Posterior vena cava (tissue), 2 donors: ENCODE measurements at regions of chr5 and their contacts with region 1.

Region 1: GRCh38 chr5:146380714-146381113 is 42.1 kb downstream of the POU4F3 start:
- DNase-seq: no peak

Region 2: DNA sequence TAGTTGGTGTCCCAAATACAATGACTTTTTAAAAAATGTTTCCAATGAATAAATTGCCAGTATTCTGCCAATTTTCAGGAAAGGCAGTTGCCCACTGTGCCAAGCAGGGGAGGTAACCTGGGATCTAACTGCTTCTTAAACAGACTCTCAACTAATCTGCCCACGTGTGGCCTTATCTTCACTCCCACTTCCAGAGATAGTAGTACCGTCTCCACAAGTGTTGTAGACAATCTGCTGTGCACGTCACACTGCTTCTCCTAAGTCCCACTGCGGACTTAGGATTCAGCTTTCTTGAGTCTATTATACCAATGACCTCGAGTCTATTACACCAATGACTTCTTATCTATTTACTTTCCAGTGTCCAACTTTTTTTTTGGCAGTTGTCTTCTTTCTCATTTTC is 20.9 kb before region 1 on chr5:
- intact Hi-C with region 1: loop called in 1 of 2 experiments (anchors 1 kb)
- DNase-seq: no peak

Region 3: DNA sequence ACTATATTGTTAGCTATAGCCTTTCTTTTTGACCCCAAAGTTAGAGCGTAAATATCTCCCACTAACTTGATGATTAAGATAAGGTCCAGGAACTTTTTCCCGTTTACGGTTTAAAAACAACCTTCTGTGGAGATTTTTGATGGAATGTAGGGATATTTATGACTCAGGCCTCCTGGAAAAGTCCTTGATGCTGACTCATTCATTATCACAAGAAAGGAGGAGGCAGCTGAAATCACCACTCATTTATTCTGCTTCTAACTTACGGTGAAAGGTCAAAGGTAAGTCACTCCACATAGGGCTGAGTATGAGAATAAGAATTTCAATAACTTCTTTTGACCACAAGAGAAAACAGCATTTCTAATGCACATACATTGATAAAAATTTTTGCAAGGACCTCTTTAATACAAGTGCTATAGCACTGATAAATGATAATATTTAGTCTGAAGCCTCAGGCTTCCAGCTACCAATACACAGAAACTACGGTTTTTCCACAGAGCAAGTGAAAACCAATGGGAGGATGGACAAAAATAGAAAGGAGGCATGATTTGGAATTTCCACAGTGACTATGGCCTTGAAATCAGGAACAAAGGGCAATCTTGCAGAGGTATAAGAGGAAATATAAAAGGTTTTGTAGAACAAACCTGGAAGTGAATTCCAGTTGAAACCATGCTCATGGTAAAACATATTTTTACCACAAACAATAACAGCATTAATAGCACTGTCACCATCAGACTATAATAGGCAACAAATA is 351.4 kb after region 1 on chr5:
- intact Hi-C with region 1: no loop called
- DNase-seq: no peak

Region 4: GRCh38 chr5:146813346-146814157 is 432.8 kb after region 1 on chr5:
- intact Hi-C with region 1: no loop called
- DNase-seq: no peak